Tibial artery (tissue), 4 donors: ENCODE measurements at regions of chr9 and their contacts with region 1.

Region 1: GRCh38 chr9:31730398-31730797 is 654.0 kb upstream of the ACO1 start:
- DNase-seq: no peak
- H3K4me3 ChIP-seq: no peak overlapping the region
- H3K27ac ChIP-seq: no peak overlapping the region
- H3K4me1 ChIP-seq: no peaks in the 10 kb centered on the region
- H3K27me3 ChIP-seq: no peaks in the 10 kb centered on the region
- CTCF ChIP-seq: no peak

Region 2: GRCh38 chr9:31839273-31839672 is 108.9 kb after region 1 on chr9:
- intact Hi-C with region 1: loop called (anchors 10 kb)
- DNase-seq: no peak
- H3K4me3 ChIP-seq: no peak overlapping the region
- H3K27ac ChIP-seq: no peak overlapping the region
- H3K4me1 ChIP-seq: no peaks in the 10 kb centered on the region
- H3K27me3 ChIP-seq: no peaks in the 10 kb centered on the region
- CTCF ChIP-seq: no peak